ENCODE measurements at regions of chr10 and their contacts with region 1.

Region 1: GRCh38 chr10:63767138-63767801 is 246.1 kb downstream of the REEP3 start:
- DNase-seq: peak; percentile 66
- H3K4me3 ChIP-seq: no peak overlapping the region
- H3K27me3 ChIP-seq: no peaks in the 10 kb centered on the region; the same call in none of the 2 replicates
- CTCF ChIP-seq: peak; percentile 29; the same call in 1 of the 2 replicates

Region 2: DNA sequence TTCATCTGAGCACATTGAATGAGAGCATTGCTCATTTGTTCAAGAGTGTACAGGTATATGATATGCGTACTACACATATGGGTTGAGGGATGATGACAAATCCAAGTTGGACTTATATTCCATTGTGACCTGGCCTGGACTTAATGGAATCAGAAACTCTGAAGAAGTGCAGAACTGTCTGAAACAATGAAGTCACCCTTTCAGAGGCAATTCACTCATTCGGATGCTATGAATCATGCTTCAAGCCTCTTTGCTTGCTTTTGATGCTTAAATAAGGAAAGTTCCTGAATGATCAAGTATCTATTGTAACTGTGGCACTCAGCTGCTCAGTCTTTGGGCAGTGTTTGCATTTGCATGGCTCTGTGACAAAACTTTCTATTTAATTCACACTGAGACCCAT is 1299.7 kb before region 1 on chr10:
- CTCF ChIA-PET with region 1: no interaction called
- POLR2A ChIA-PET with region 1: interaction called, 20 read pairs
- DNase-seq: no peak
- H3K4me3 ChIP-seq: no peak overlapping the region
- H3K27me3 ChIP-seq: no peaks in the 10 kb centered on the region
- CTCF ChIP-seq: no peak

Region 3: DNA sequence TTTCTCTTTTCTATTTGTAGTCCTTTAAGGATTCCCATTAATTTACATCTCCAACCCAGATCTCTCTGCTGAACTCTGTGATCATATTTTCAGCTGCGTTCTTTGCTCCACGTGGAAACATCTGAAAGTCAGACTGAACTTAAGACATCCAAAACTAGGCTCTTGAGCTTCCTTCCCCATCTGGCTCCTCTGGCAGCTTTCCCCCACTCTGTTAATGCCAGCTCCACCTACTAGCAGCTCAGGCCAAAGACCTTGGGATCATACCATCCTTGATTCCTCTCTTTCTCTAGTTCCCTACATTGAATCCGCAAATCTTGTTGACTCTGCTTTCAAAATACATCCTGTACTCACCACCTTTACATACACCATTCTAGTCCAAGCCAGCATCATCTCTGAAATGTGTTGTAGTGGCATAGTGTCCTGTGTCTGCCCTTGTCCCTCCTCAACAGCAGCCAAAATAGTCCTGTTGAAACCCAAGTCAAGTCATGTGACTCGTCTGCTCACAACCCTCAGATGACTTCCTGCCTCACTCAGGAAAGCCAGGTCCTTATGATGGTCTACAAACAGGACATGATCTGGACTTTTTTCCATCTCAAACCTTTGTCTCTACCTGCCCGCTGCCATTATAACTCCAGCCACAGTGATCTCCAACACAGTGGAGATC is 239.1 kb before region 1 on chr10:
- CTCF ChIA-PET with region 1: no interaction called
- POLR2A ChIA-PET with region 1: no interaction called
- DNase-seq: no peak
- H3K4me3 ChIP-seq: no peak overlapping the region
- H3K27me3 ChIP-seq: no peaks in the 10 kb centered on the region
- CTCF ChIP-seq: no peak

Measured in BJ (cell line).